ENCODE measurements at regions of chr15 and their contacts with region 1.

Region 1: GRCh38 chr15:65804252-65804931 is 12.3 kb upstream of the DENND4A start:
- DNase-seq: no peak
- ATAC-seq: no peak
- H3K4me3 Mint-ChIP-seq: no peak overlapping the region
- H3K27ac Mint-ChIP-seq: peak overlapping the region in 9 of 10 donors; percentile 52 to 98 (median 86)
- H3K4me1 Mint-ChIP-seq: peaks cover 8 to 37% (median 33%) of the 10 kb centered on the region in 4 donors
- H3K27me3 Mint-ChIP-seq: no peaks in the 10 kb centered on the region

Region 2: DNA sequence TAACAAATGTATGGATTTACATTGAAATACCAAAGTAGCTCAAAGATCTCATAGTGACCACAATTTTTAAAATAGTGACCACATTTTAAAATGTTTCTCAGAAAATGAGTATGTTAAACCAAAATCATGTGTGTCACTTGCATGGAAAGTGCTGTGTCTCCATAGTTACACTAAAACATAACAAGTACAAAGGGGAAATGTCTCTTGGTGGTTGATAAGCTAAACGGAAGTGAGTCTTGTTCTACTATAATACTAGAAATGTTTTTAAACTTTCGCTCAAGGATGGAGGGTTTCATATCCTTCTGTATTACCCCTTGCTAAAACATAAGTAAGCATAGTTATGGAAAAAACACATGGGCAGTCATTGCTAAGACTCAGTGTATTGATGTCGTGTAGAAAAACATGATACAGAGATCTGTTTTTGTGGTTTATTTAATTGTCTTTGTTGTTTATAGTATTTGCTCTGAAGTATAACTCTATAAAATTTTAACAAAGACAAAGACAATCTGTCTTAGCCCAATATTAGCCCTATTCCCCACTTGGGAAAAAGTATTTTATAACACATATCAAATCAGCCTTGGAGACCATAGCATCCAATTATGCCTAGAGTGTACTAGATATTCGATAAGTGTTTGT is 14.7 kb after region 1 on chr15:
- POLR2A ChIA-PET with region 1: interaction called, 49 read pairs
- DNase-seq: peak in 6 of 10 donors; percentile 28 to 93 (median 76)
- ATAC-seq: peak; percentile 91 to 95
- H3K4me3 Mint-ChIP-seq: peak overlapping the region; percentile 13 to 90 (median 75)
- H3K27ac Mint-ChIP-seq: peak overlapping the region; percentile 94 to 99 (median 98)
- H3K4me1 Mint-ChIP-seq: peaks cover 16 to 76% (median 51%) of the 10 kb centered on the region in 4 donors
- H3K27me3 Mint-ChIP-seq: no peaks in the 10 kb centered on the region

Region 3: GRCh38 chr15:65832549-65833364 is 28.4 kb after region 1 on chr15:
- POLR2A ChIA-PET with region 1: interaction called, 11 read pairs
- DNase-seq: peak; percentile 27 to 73 (median 48)
- ATAC-seq: peak; percentile 57 to 60
- H3K4me3 Mint-ChIP-seq: peak overlapping the region; percentile 69 to 91 (median 81)
- H3K27ac Mint-ChIP-seq: peak overlapping the region; percentile 92 to 98 (median 96)
- H3K4me1 Mint-ChIP-seq: peaks cover 24 to 65% (median 51%) of the 10 kb centered on the region in 4 donors
- H3K27me3 Mint-ChIP-seq: no peaks in the 10 kb centered on the region

Measured in naive thymus-derived CD8-positive, alpha-beta T cell (primary cell).